ENCODE measurements at regions of chr13 and their contacts with region 1.

Region 1: GRCh38 chr13:41019011-41019487 is at the start of gene ELF1:
- DNase-seq: peak; percentile 81
- ATAC-seq: peak; percentile 93
- H3K4me3 Mint-ChIP-seq: peak within 1 kb of the TSS; percentile 90
- H3K27ac Mint-ChIP-seq: peak within 1 kb of the TSS; percentile 97
- H3K4me1 Mint-ChIP-seq: peaks cover 47% of the 10 kb centered on the region
- H3K27me3 Mint-ChIP-seq: no peaks in the 10 kb centered on the region
- total RNA-seq, gene ELF1: 120 to 143 TPM

Region 2: DNA sequence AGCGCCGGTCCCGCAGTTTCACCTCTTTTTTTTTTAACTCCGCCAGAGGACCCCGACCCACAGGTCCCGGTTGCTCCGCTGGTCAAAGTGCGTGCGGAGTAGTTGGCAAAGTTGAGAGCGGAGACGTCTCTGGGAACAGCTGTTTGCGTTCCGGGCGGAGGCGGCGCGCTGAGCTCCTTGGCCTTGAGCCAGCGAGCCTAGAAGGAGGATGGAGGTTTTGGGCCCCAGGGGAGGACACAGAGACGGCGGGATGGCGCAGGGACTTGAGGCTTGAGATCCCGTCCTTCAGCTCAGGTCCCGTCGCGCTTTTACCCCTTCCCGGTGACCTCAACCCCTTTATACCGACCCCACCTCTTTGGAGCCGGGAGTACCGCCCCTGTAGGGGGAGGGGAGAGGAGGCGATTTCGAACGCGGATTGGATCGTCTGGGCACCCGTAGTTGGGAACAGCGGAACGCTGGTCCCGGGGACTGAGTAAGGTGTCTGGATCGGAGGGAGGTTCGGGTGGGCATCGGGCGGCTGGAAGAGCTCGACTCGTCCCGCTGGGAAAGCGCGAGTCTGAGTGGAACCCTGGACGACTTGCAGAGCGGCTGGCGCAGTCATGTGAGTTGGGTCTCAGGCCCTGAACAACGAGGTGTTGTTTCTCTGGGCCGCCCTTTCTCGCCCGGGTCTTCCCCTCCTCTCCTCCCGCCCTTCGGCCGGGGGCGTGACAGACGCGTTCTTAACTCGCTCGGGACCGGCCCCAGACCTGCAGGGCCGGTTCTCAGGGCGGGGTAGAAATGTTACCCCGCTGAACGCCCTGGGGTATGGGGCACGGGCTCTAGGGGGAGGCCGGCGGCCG is 42.2 kb after region 1 on chr13 and contains the start of gene WBP4:
- CTCF ChIA-PET with region 1: interaction called, 27 read pairs
- DNase-seq: peak; percentile 94
- ATAC-seq: peak; percentile 78
- H3K4me3 Mint-ChIP-seq: peak within 1 kb of the TSS; percentile 99
- H3K27ac Mint-ChIP-seq: peak within 1 kb of the TSS; percentile 98
- H3K4me1 Mint-ChIP-seq: peaks cover 48% of the 10 kb centered on the region
- H3K27me3 Mint-ChIP-seq: peaks cover 2% of the 10 kb centered on the region
- total RNA-seq, gene WBP4: 8.4 to 13.2 TPM